ENCODE measurements at regions of chr1 and their contacts with region 1.

Region 1: GRCh38 chr1:205485338-205486228 is 18.9 kb upstream of the CDK18 start:
- DNase-seq: peak; percentile 79
- H3K4me3 Mint-ChIP-seq: no peak overlapping the region
- H3K27ac Mint-ChIP-seq: no peak overlapping the region
- H3K4me1 Mint-ChIP-seq: peaks cover 12% of the 10 kb centered on the region
- H3K27me3 Mint-ChIP-seq: peaks cover 58% of the 10 kb centered on the region

Region 2: GRCh38 chr1:205321164-205321958 is 164.2 kb before region 1 on chr1 and contains the start of gene NUAK2:
- CTCF ChIA-PET with region 1: interaction called, 15 read pairs
- intact Hi-C with region 1: no loop called
- DNase-seq: peak; percentile 90
- H3K4me3 Mint-ChIP-seq: peak within 1 kb of the TSS; percentile 98
- H3K27ac Mint-ChIP-seq: peak within 1 kb of the TSS; percentile 93
- H3K4me1 Mint-ChIP-seq: peaks cover 50% of the 10 kb centered on the region
- H3K27me3 Mint-ChIP-seq: no peaks in the 10 kb centered on the region
- total RNA-seq, gene NUAK2: 11.2 to 12.2 TPM

Region 3: GRCh38 chr1:205396967-205397616 is 88.5 kb before region 1 on chr1:
- CTCF ChIA-PET with region 1: interaction called, 130 read pairs
- intact Hi-C with region 1: loop called (anchors 1 kb)
- DNase-seq: peak; percentile 43
- H3K4me3 Mint-ChIP-seq: no peak overlapping the region
- H3K27ac Mint-ChIP-seq: no peak overlapping the region
- H3K4me1 Mint-ChIP-seq: no peaks in the 10 kb centered on the region
- H3K27me3 Mint-ChIP-seq: peaks cover 10% of the 10 kb centered on the region

Region 4: GRCh38 chr1:205430696-205431305 is 54.8 kb before region 1 on chr1:
- CTCF ChIA-PET with region 1: interaction called, 18 read pairs
- intact Hi-C with region 1: no loop called
- DNase-seq: peak; percentile 75
- H3K4me3 Mint-ChIP-seq: peak overlapping the region; percentile 78
- H3K27ac Mint-ChIP-seq: no peak overlapping the region
- H3K4me1 Mint-ChIP-seq: peaks cover 9% of the 10 kb centered on the region
- H3K27me3 Mint-ChIP-seq: no peaks in the 10 kb centered on the region

Region 5: GRCh38 chr1:205472737-205473441 is 12.7 kb before region 1 on chr1:
- CTCF ChIA-PET with region 1: interaction called, 28 read pairs
- intact Hi-C with region 1: no loop called
- DNase-seq: no peak
- H3K4me3 Mint-ChIP-seq: no peak overlapping the region
- H3K27ac Mint-ChIP-seq: no peak overlapping the region
- H3K4me1 Mint-ChIP-seq: no peaks in the 10 kb centered on the region
- H3K27me3 Mint-ChIP-seq: peaks cover 37% of the 10 kb centered on the region